Ascending aorta (tissue), 2 donors: ENCODE measurements at regions of chr17 and their contacts with region 1.

Region 1: GRCh38 chr17:77602062-77602746 is 356.3 kb upstream of the TNRC6C start:
- DNase-seq: peak; percentile 72 to 95
- H3K4me3 ChIP-seq: peak overlapping the region; percentile 19 to 46
- H3K27ac ChIP-seq: peak overlapping the region; percentile 98 to 99
- H3K4me1 ChIP-seq: peaks cover 23 to 41% of the 10 kb centered on the region in 2 donors
- H3K27me3 ChIP-seq: no peaks in the 10 kb centered on the region
- CTCF ChIP-seq: no peak

Region 2: DNA sequence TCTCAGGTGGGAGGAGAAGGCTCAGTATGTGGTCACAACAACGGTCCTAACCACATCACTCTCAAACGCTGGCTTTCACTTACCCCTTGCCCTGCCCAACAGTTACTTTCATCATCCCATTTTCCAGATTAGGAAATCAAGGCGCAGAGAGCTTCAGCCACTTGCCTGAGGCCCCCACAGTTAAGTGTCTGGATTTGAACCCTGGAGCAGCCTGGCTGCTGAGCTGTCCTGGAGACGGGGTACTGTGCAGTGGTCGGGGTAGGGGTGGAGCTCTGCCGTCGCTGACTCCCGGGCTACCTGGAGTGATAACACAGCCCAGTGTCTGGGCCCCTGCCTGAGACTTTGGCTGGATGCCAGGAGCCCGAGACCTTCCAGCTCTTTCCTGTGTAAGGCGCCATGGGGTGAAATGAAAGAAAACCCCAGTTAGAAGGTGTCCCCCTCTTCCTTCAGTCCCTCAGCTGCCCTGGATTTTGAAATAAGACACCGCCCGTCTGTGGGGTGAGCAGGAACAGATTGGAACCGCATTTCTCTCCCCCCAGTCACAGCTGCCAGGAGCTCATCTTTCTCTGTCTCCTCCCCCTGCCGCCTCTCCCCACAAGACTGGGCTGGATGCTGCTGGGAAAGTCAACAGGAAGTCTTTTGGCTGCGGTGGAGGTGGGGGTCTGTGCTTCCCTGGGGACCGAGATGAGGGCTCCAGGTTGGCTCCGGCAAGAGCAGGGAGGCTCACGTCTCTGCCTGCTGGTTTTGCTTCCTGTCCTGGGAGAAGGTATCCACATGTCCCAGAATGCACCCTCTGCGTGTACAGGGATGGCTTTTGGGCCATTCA is 181.2 kb before region 1 on chr17:
- intact Hi-C with region 1: loop called (anchors 5 kb)
- DNase-seq: no peak
- H3K4me3 ChIP-seq: no peak overlapping the region
- H3K27ac ChIP-seq: peak overlapping the region in 1 of 2 donors; percentile 41
- H3K4me1 ChIP-seq: peaks cover 16 to 46% of the 10 kb centered on the region in 2 donors
- H3K27me3 ChIP-seq: no peaks in the 10 kb centered on the region
- CTCF ChIP-seq: no peak

Region 3: DNA sequence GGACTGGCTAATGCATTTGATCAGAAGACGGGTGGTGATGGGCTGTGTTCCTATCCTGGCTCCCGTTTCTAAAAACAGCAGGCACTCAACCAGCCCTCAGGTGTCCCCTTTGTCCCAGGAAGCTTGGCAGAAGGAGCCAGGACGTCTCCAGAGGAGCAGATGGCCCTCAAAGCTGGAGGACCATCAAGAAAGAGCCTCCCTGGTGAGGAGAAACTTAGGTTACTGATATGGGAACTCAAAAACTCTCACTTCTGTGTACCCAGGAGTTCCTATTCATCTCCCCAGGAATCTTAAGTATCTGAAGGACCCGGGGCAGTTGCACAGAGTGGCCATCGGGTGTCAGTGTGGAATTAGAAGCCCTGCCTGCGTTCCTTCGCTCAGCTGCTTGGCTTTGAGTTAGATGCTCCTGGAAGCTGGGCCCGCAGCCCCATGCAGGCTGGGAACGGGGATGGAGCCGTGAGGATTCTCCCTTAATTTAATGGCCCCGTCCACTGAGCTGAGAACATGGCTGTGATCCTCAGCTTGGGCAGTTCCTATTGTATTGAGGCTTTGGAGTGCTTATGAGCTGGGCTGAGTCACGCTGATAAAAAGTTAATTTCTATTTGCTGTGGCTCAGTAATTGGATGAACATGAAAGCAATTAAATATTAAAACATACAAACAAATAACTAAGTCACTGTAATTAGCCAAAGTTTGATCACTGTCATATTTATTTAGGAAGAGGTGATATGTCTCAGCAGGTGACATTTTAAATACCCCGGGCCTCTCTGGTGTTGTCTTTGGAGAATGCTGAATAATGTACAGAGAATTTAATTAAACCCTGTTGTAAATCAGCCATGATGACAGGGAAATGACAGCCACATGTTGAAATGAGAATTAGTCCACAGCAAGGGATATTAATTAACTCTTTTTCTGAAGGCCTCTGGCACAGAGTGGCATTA is 59.4 kb before region 1 on chr17:
- intact Hi-C with region 1: loop called (anchors 2 kb)
- DNase-seq: peak; percentile 22 to 91
- H3K4me3 ChIP-seq: no peak overlapping the region
- H3K27ac ChIP-seq: peak overlapping the region in 1 of 2 donors; percentile 48
- H3K4me1 ChIP-seq: peaks cover 4 to 10% of the 10 kb centered on the region in 2 donors
- H3K27me3 ChIP-seq: no peaks in the 10 kb centered on the region
- CTCF ChIP-seq: peak; percentile 87 to 93 (median 93)

Region 4: GRCh38 chr17:77734341-77735080 is 132.3 kb after region 1 on chr17:
- intact Hi-C with region 1: loop called (anchors 2 kb)
- DNase-seq: peak; percentile 45 to 94
- H3K4me3 ChIP-seq: peak overlapping the region in 1 of 2 donors; percentile 47
- H3K27ac ChIP-seq: peak overlapping the region; percentile 85 to 87
- H3K4me1 ChIP-seq: peaks cover 21 to 44% of the 10 kb centered on the region in 2 donors
- H3K27me3 ChIP-seq: no peaks in the 10 kb centered on the region
- CTCF ChIP-seq: peak in 1 of 3 experiments; percentile 29

Region 5: DNA sequence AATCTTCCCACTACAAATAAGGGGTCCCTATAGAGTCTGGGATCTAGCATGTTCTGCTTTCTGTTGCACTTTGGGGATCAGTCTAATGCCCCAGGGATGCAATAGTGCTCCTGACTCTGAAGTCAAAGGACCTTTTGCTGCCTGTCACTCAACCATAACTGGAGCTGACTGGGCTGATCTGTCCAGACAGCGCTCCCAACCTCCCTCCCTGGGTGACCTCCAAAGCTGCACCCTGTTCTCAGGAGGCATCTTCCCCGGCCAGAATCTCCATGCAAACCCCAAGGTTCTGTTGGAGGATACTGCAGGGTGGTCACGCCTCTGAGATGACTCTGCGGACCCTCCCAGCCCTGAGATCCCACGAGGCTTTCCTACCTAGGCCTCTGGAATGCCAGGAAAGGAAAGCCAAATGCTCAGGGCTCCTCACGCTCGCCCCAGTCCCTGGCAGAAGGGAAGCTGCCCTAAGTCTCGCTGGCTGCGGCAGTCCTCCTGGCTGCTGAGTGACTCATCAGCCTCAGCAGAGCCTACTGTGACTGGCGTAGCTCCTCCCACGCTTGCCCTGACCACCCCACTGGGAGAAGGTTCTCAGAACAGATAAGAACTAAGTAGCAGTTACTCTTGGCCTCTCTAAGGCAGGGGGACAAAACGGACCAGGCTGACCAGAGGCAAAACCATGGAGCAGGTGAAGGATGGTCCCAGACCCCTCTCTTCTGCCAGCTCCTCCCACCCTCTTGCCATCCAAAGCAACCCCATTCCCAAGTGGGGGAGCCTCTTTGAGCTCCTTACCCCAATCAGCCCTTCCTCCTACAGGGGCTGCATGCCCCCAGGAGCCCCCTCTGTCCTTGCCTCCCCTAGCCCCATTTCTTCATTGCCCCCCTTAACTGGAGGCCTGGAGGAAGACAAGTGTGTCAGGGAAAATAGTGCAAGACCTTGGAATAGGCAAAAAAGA is 232.2 kb after region 1 on chr17:
- intact Hi-C with region 1: loop called (anchors 5 kb)
- DNase-seq: peak; percentile 64 to 91
- H3K4me3 ChIP-seq: no peak overlapping the region
- H3K27ac ChIP-seq: peak overlapping the region; percentile 66 to 70
- H3K4me1 ChIP-seq: peaks cover 18 to 39% of the 10 kb centered on the region in 2 donors
- H3K27me3 ChIP-seq: no peaks in the 10 kb centered on the region
- CTCF ChIP-seq: no peak

Region 6: DNA sequence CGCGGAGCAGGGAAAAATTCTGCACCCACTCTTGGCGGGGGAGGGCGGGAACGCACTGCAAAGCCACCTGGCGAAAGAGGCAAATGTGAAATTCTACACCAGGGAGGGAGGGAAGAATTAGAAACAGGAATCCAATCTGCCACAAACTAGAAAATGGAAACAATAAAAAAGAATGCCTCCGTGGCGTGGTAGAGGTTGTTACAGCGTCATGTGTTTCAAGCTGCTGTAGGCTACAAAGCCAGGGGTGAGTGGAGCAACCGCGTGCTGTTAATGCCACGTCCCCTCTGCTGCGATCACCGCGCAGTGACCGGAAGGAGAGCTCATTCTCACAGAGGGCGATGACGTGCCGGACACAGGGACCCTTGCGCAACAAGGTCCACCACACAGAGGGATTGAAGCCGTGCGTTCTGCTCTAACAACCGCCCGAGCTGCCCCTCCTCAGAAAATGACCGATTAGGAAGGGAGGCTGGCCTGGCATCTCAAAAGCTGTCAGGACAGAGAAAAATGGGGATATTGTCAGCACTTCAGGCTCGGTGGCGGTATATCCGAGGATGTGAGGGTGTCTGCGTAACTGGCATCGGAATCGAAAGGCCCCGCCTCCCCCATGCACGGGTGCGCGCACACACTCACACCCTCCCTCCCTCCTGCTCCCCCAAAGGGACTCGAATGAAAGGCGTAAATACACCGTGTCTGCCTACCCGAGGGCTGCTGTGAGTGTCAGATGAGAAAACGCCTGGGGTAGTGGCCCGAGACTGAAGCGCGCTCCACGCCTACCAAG is 285.4 kb after region 1 on chr17:
- intact Hi-C with region 1: loop called (anchors 2 kb)
- DNase-seq: peak; percentile 80 to 97
- H3K4me3 ChIP-seq: peak overlapping the region; percentile 54 to 68
- H3K27ac ChIP-seq: peak overlapping the region; percentile 80 to 84
- H3K4me1 ChIP-seq: peaks cover 0 to 12% of the 10 kb centered on the region in 2 donors
- H3K27me3 ChIP-seq: no peaks in the 10 kb centered on the region
- CTCF ChIP-seq: no peak

Region 7: GRCh38 chr17:78176548-78177025 is 574.4 kb after region 1 on chr17:
- intact Hi-C with region 1: loop called (anchors 5 kb)
- DNase-seq: peak in 1 of 2 donors; percentile 84
- H3K4me3 ChIP-seq: no peak overlapping the region
- H3K27ac ChIP-seq: peak overlapping the region; percentile 81 to 89
- H3K4me1 ChIP-seq: peaks cover 10 to 73% of the 10 kb centered on the region in 2 donors
- H3K27me3 ChIP-seq: no peaks in the 10 kb centered on the region
- CTCF ChIP-seq: peak; percentile 64 to 81 (median 78)